SK-N-SH (cell line): ENCODE measurements at regions of chr11 and their contacts with region 1.

Region 1: DNA sequence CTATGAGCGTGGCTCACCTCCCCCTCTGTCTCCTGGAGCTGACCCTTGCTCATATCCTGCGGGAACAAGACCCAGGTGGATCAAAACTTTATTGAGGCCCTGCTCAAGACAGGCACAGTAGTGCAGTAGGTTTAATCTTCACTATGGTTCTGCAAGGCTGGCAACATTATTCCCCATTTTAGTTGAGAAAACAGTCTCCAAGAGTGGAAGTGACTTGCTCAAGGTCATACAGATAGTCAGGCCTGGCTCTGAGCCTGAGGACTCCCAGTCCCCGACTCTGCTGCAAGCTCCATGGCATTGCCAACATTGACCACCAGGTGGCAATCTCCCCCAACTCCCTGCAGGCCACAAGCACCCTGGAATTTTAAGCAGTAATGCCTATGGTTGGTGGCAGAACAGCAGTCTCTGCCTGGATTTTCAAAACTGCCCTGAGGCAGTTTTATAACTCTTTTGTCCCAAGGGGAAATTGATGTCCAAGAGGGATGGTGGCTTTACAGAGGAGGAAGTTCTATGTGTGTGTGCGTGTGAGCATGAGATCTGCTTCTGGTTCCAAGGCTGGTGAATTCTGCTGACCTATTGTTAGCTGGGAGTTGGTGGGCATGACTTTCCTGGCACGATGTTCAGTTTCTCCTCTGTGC is 34.1 kb downstream of the NEU3 start:
- DNase-seq: peak; percentile 79
- H3K4me3 ChIP-seq: no peak overlapping the region; a peak in 1 of 4 replicates
- H3K27ac ChIP-seq: no peak overlapping the region
- H3K4me1 ChIP-seq: peaks cover 0 to 13% of the 10 kb centered on the region in 2 experiments; a peak in 1 of 4 replicates
- H3K27me3 ChIP-seq: no peaks in the 10 kb centered on the region
- CTCF ChIP-seq: peak; percentile 96
- EP300 ChIP-seq: no peak
- RAD21 ChIP-seq: peak; percentile 95

Region 2: GRCh38 chr11:75004215-75004614 is 18.7 kb before region 1 on chr11:
- CTCF ChIA-PET with region 1: interaction called, 65 read pairs
- POLR2A ChIA-PET with region 1: no interaction called
- DNase-seq: no peak
- H3K4me3 ChIP-seq: no peak overlapping the region
- H3K27ac ChIP-seq: no peak overlapping the region
- H3K4me1 ChIP-seq: no peaks in the 10 kb centered on the region
- H3K27me3 ChIP-seq: no peaks in the 10 kb centered on the region
- CTCF ChIP-seq: no peak
- EP300 ChIP-seq: no peak
- RAD21 ChIP-seq: no peak

Region 3: DNA sequence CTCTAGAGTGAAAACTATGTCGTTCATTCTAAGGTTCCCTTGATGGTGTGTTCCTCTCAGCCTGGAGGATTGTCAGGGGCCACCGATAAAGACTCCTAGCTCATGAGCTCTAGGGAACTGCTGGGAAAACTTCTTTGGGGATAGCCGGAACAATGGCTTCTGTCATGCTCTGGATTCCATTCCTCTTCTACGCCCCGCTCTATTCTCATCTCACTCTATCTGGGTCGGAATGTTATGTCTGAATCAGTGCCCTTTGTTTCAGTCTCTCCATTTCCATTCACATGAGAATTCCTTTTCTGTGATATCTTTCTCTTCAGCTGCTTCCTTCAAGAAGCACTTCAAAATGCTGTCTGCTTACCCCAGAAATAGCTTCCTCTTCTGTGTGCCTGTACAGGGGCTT is 111.1 kb after region 1 on chr11:
- CTCF ChIA-PET with region 1: interaction called, 133 read pairs
- POLR2A ChIA-PET with region 1: no interaction called
- DNase-seq: no peak
- H3K4me3 ChIP-seq: no peak overlapping the region
- H3K27ac ChIP-seq: no peak overlapping the region
- H3K4me1 ChIP-seq: no peaks in the 10 kb centered on the region; a peak in 1 of 4 replicates
- H3K27me3 ChIP-seq: peaks cover 13% of the 10 kb centered on the region; the same call in 1 of the 2 replicates
- CTCF ChIP-seq: no peak
- EP300 ChIP-seq: no peak
- RAD21 ChIP-seq: no peak

Region 4: GRCh38 chr11:75223954-75224643 is 201.2 kb after region 1 on chr11:
- CTCF ChIA-PET with region 1: interaction called, 12 read pairs
- POLR2A ChIA-PET with region 1: no interaction called
- DNase-seq: no peak
- H3K4me3 ChIP-seq: no peak overlapping the region
- H3K27ac ChIP-seq: no peak overlapping the region
- H3K4me1 ChIP-seq: peaks cover 0 to 2% of the 10 kb centered on the region in 2 experiments; a peak in 1 of 4 replicates
- H3K27me3 ChIP-seq: 0 out of 2 replicates have a peak, but pooled peaks cover 5% of the 10 kb centered on the region
- CTCF ChIP-seq: no peak
- EP300 ChIP-seq: no peak
- RAD21 ChIP-seq: no peak; the same call in 1 of the 2 replicates